Activated B cell treated with CpG ODN at 0.5 μM for 24 hours (primary cell): ENCODE measurements at regions of chr1 and their contacts with region 1.

Region 1: DNA sequence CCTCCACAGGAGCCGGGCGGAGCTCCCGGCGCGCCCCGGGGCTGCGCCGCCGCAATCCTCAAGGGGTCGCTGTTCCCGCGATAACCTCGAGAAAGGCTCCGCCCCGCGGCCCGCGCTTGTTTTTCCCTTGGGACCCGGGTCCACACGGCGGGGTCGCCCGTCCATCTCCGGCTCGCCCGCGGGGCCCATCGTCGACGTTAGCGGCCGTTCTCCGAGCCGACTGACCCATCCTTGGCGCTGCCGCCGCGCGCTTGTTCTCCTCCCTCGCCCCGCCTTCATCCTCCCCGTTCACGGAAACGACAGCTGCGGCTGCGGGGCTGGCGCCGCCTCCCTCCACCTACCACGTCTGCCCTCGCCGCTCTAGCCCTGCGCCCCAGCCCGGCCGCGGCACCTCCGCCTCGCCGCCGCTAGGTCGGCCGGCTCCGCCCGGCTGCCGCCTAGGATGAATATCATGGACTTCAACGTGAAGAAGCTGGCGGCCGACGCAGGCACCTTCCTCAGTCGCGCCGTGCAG is at the start of gene SH3GLB1:
- DNase-seq: peak; percentile 92
- ATAC-seq: peak; percentile 87
- H3K4me3 Mint-ChIP-seq: peak within 1 kb of the TSS; percentile 99
- H3K27ac Mint-ChIP-seq: peak within 1 kb of the TSS; percentile 99
- H3K4me1 Mint-ChIP-seq: peaks cover 46% of the 10 kb centered on the region
- H3K27me3 Mint-ChIP-seq: no peaks in the 10 kb centered on the region
- CTCF ChIP-seq: peak; percentile 26
- total RNA-seq, gene SH3GLB1: 63.8 and 63.9 TPM in 2 replicates

Region 2: DNA sequence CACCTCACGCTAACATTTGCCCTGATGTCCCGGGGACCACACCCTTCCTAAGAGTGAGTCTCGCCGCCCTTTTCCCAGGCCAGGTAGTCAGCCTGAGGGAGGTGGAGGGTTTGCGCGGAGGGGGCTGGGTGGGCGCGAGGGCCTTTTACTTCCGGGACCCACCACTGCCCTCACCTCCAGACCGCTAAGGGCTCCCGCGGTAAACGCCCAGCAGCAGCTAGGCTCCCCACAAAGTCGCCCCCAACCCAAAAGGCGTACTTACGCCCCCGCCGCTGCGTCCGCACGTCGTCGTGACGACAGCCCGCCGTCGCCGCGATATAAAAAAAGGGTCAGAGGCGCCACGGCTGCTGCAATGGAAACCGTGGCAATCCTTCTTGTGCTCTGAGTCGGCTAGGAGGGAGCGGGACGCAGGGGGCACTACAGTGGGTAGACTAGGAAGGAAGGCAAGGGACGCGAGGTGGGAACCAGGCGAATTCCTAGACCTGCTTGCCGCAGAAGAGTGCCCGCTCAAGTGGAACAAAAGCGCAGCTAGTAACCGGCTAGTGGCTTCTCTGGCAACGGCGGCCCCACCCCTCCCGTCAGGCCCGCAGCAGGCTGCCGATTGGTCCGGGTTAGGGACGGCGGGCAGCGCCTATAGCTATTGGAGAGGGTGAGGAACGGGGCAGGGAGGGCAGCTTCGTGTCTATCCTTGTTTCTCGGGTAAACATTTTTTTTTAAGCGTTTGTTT is 308.6 kb before region 1 on chr1 and contains the start of gene ODF2L:
- CTCF ChIA-PET with region 1: interaction called, 5 read pairs
- POLR2A ChIA-PET with region 1: interaction called, 34 read pairs
- intact Hi-C with region 1: loop called (anchors 1 kb)
- DNase-seq: peak; percentile 78
- ATAC-seq: peak; percentile 99
- H3K4me3 Mint-ChIP-seq: peak within 1 kb of the TSS; percentile 98
- H3K27ac Mint-ChIP-seq: peak within 1 kb of the TSS; percentile 95
- H3K4me1 Mint-ChIP-seq: peaks cover 45% of the 10 kb centered on the region
- H3K27me3 Mint-ChIP-seq: no peaks in the 10 kb centered on the region
- CTCF ChIP-seq: no peak
- total RNA-seq, gene ODF2L: 28.2 and 36.1 TPM in 2 replicates

Region 3: GRCh38 chr1:86741947-86742572 is 37.5 kb after region 1 on chr1:
- CTCF ChIA-PET with region 1: interaction called, 6 read pairs
- POLR2A ChIA-PET with region 1: interaction called, 3 read pairs
- intact Hi-C with region 1: loop called (anchors 5 kb)
- DNase-seq: no peak
- ATAC-seq: no peak
- H3K4me3 Mint-ChIP-seq: no peak overlapping the region
- H3K27ac Mint-ChIP-seq: no peak overlapping the region
- H3K4me1 Mint-ChIP-seq: peaks cover 2% of the 10 kb centered on the region
- H3K27me3 Mint-ChIP-seq: no peaks in the 10 kb centered on the region
- CTCF ChIP-seq: peak; percentile 73

Region 4: GRCh38 chr1:86866665-86867064 is 162.2 kb after region 1 on chr1:
- CTCF ChIA-PET with region 1: no interaction called
- POLR2A ChIA-PET with region 1: no interaction called
- intact Hi-C with region 1: loop called (anchors 5 kb)
- DNase-seq: no peak
- ATAC-seq: peak; percentile 5
- H3K4me3 Mint-ChIP-seq: peak overlapping the region; percentile 65
- H3K27ac Mint-ChIP-seq: peak overlapping the region; percentile 87
- H3K4me1 Mint-ChIP-seq: peaks cover 44% of the 10 kb centered on the region
- H3K27me3 Mint-ChIP-seq: no peaks in the 10 kb centered on the region
- CTCF ChIP-seq: no peak

Region 5: GRCh38 chr1:86965012-86965826 is 260.7 kb after region 1 on chr1:
- CTCF ChIA-PET with region 1: no interaction called
- POLR2A ChIA-PET with region 1: no interaction called
- intact Hi-C with region 1: loop called (anchors 5 kb)
- DNase-seq: no peak
- ATAC-seq: peak; percentile 34
- H3K4me3 Mint-ChIP-seq: no peak overlapping the region
- H3K27ac Mint-ChIP-seq: peak overlapping the region; percentile 14
- H3K4me1 Mint-ChIP-seq: peaks cover 12% of the 10 kb centered on the region
- H3K27me3 Mint-ChIP-seq: no peaks in the 10 kb centered on the region
- CTCF ChIP-seq: no peak